Ascending aorta (tissue), 2 donors: ENCODE measurements at regions of chr7 and their contacts with region 1.

Region 1: DNA sequence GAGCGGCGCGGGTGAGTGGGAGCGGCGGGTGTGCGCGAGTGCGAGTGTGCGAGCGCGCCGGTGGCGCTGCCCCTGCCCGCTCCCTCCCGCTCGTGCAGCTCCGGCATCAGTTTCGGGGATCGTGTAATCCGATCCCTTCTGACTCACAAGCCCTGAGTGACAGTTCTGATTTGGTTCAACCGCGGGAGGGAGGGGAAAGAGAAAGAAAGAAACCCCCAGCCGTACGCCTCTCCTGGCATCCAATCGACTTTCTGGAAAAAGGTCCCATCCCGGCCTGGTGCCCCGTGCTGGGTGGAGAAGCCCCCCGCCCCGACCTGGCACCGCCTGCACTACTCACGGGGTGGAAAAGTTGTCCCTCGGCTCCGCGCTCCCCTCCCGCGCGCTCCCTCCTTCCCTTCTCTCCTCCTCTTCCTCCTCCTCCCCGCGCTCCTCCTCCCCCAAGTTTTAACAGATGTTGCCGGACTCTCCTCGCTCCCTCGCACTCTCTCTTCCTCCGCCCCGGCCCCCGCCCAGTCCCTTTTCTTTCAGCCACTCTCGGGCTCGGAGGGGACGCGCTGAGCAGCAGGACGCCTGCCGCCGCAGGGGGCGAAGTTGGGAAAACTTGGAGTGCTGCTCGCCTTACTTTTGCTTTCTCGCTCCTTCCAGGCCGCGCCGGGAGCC is at the start of gene GLI3:
- DNase-seq: peak; percentile 44 to 93
- H3K4me3 ChIP-seq: peak within 1 kb of the TSS; percentile 77 to 85
- H3K27ac ChIP-seq: peak within 1 kb of the TSS; percentile 90 to 98
- H3K4me1 ChIP-seq: peaks cover 0 to 4% of the 10 kb centered on the region in 2 donors
- H3K27me3 ChIP-seq: no peaks in the 10 kb centered on the region
- CTCF ChIP-seq: peak; percentile 9 to 35 (median 21)
- total RNA-seq, gene GLI3: 2.2 TPM

Region 2: DNA sequence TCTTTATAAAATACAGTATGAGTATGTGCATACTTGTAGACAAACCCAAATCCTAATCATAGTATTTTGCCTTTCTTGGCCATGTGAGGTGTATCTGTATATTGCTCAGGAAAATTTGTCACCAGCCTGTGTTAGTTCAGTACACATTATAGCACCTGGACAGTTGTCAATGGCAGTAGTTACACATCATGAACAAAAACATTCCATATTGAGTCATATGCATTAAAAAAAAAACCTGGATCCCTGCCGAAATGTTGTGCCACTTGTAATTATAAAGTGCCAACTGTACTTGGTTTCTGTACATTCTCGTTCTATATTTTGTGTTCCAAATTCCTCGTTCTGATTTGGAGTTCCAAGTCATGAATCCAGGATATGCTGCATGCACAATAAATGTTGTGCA is 944.8 kb before region 1 on chr7:
- intact Hi-C with region 1: no loop called
- DNase-seq: no peak
- H3K4me3 ChIP-seq: no peak overlapping the region
- H3K27ac ChIP-seq: no peak overlapping the region
- H3K4me1 ChIP-seq: no peaks in the 10 kb centered on the region
- H3K27me3 ChIP-seq: no peaks in the 10 kb centered on the region
- CTCF ChIP-seq: no peak

Region 3: GRCh38 chr7:41940760-41941343 is 296.4 kb before region 1 on chr7:
- intact Hi-C with region 1: loop called (anchors 5 kb)
- DNase-seq: peak in 1 of 2 donors; percentile 81
- H3K4me3 ChIP-seq: no peak overlapping the region
- H3K27ac ChIP-seq: no peak overlapping the region
- H3K4me1 ChIP-seq: no peaks in the 10 kb centered on the region
- H3K27me3 ChIP-seq: no peaks in the 10 kb centered on the region
- CTCF ChIP-seq: peak; percentile 74 to 89 (median 86)

Region 4: DNA sequence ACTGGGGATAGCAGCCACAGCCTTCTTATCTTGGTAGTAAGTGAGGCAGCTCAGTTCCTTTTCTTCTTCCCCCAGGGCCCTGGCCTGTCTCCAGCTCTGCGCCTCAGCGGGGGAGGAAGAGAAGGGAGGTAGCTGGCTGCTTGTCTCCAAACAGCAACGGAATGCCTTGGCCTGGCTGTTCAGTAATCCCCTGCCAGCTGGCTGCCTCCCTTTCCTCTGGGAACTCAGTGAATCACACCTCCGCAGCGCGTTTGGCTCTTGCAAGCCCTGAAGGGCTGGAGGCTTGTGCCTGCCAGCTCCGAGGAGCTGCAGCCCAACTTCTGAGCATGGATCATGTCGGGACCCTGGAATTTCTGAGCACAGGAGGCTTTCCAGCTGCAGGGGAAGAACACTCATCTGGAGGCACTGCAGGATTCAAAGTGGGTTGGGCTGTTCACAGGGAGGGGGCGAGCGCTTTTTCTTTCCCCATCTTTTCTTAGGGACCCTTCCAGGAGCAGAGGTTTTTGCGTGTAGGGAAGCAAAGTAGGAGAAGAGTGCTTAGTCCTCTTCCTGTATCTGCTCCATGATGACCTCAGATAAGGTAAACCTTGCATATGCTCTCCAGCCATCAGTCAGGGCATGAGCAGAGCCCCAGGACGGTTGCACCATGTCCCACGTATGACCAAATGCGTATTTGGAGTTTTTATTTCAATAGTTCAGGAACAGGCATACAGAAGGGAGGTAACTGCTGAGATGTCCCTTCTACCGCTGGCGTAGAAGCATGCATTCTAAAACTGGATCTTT is 281.2 kb before region 1 on chr7:
- intact Hi-C with region 1: loop called (anchors 5 kb)
- DNase-seq: peak; percentile 54 to 97
- H3K4me3 ChIP-seq: peak overlapping the region; percentile 22 to 37
- H3K27ac ChIP-seq: peak overlapping the region in 1 of 2 donors; percentile 2
- H3K4me1 ChIP-seq: peaks cover 0 to 20% of the 10 kb centered on the region in 2 donors
- H3K27me3 ChIP-seq: no peaks in the 10 kb centered on the region
- CTCF ChIP-seq: no peak

Region 5: GRCh38 chr7:41977151-41977651 is 260.1 kb before region 1 on chr7:
- intact Hi-C with region 1: loop called (anchors 5 kb)
- DNase-seq: no peak
- H3K4me3 ChIP-seq: no peak overlapping the region
- H3K27ac ChIP-seq: no peak overlapping the region
- H3K4me1 ChIP-seq: peaks cover 0 to 9% of the 10 kb centered on the region in 2 donors
- H3K27me3 ChIP-seq: no peaks in the 10 kb centered on the region
- CTCF ChIP-seq: peak; percentile 35 to 76 (median 62)

Region 6: DNA sequence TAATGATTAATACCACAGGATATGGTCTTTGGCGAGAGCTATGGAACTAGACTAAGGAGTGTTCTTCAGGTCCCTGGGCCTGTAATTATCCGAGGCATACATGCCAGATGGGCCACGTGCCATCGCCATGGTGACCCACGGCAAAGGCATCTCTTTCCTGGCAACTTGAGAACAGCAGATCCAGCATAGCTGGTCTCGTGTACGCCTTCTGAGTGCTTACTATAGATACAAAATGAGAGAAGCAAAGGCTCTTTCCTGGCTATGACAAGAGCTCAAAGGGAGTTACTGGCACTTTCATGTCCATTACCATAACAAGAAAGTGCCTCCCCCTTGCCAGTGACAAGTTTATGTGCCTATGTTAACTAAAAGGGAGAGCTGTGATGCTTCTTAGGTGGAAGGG is 25.7 kb after region 1 on chr7:
- intact Hi-C with region 1: loop called (anchors 1 kb)
- DNase-seq: peak; percentile 40 to 93
- H3K4me3 ChIP-seq: no peak overlapping the region
- H3K27ac ChIP-seq: peak overlapping the region in 1 of 2 donors; percentile 51
- H3K4me1 ChIP-seq: peaks cover 0 to 4% of the 10 kb centered on the region in 2 donors
- H3K27me3 ChIP-seq: no peaks in the 10 kb centered on the region
- CTCF ChIP-seq: no peak

Region 7: GRCh38 chr7:42911454-42912447 is 674.5 kb after region 1 on chr7 and contains the start of gene C7orf25:
- intact Hi-C with region 1: loop called (anchors 10 kb)
- DNase-seq: peak; percentile 85 to 97
- H3K4me3 ChIP-seq: peak within 1 kb of the TSS; percentile 82 to 87
- H3K27ac ChIP-seq: peak within 1 kb of the TSS; percentile 70 to 72
- H3K4me1 ChIP-seq: peaks cover 7% of the 10 kb centered on the region in 2 donors
- H3K27me3 ChIP-seq: no peaks in the 10 kb centered on the region
- CTCF ChIP-seq: no peak
- total RNA-seq, gene C7orf25: 0.75 TPM

Region 8: GRCh38 chr7:43869006-43869866 is 1631.9 kb after region 1 on chr7 and contains the start of gene MRPS24:
- intact Hi-C with region 1: loop called (anchors 10 kb)
- DNase-seq: peak; percentile 73 to 97
- H3K4me3 ChIP-seq: peak within 1 kb of the TSS; percentile 78 to 99
- H3K27ac ChIP-seq: peak within 1 kb of the TSS; percentile 93 to 95
- H3K4me1 ChIP-seq: peaks cover 12 to 17% of the 10 kb centered on the region in 2 donors
- H3K27me3 ChIP-seq: no peaks in the 10 kb centered on the region
- CTCF ChIP-seq: no peak
- total RNA-seq, gene MRPS24: 145 TPM